CD8-positive, alpha-beta T cell (primary cell): ENCODE measurements at regions of chr20 and their contacts with region 1.

Region 1: GRCh38 chr20:4956200-4956810 is 45.0 kb downstream of the SLC23A2 start:
- DNase-seq: peak in 2 of 9 experiments; percentile 71 to 78
- ATAC-seq: peak; percentile 88
- H3K4me3 ChIP-seq: no peak overlapping the region
- H3K4me3 Mint-ChIP-seq: no peak overlapping the region
- H3K27ac ChIP-seq: no peak overlapping the region
- H3K27ac Mint-ChIP-seq: no peak overlapping the region
- H3K4me1 ChIP-seq: peaks cover under 1% of the 10 kb centered on the region
- H3K4me1 Mint-ChIP-seq: peaks cover 8% of the 10 kb centered on the region
- H3K27me3 ChIP-seq: no peaks in the 10 kb centered on the region
- H3K27me3 Mint-ChIP-seq: no peaks in the 10 kb centered on the region
- CTCF ChIP-seq: peak; percentile 92

Region 2: GRCh38 chr20:4607287-4607713 is 349.0 kb before region 1 on chr20:
- CTCF ChIA-PET with region 1: no interaction called
- POLR2A ChIA-PET with region 1: no interaction called
- intact Hi-C with region 1: loop called in 1 of 2 experiments (anchors 5 kb)
- DNase-seq: peak; percentile 29 to 77 (median 61)
- ATAC-seq: peak; percentile 88
- H3K4me3 ChIP-seq: no peak overlapping the region
- H3K4me3 Mint-ChIP-seq: no peak overlapping the region
- H3K27ac ChIP-seq: no peak overlapping the region
- H3K27ac Mint-ChIP-seq: no peak overlapping the region
- H3K4me1 ChIP-seq: no peaks in the 10 kb centered on the region
- H3K4me1 Mint-ChIP-seq: peaks cover 1% of the 10 kb centered on the region
- H3K27me3 ChIP-seq: no peaks in the 10 kb centered on the region
- H3K27me3 Mint-ChIP-seq: peaks cover 31% of the 10 kb centered on the region
- CTCF ChIP-seq: peak; percentile 99

Region 3: GRCh38 chr20:4740774-4741431 is 215.4 kb before region 1 on chr20:
- CTCF ChIA-PET with region 1: interaction called, 39 read pairs
- POLR2A ChIA-PET with region 1: no interaction called
- intact Hi-C with region 1: no loop called
- DNase-seq: peak; percentile 42 to 78 (median 66)
- ATAC-seq: peak; percentile 61
- H3K4me3 ChIP-seq: no peak overlapping the region
- H3K4me3 Mint-ChIP-seq: no peak overlapping the region
- H3K27ac ChIP-seq: no peak overlapping the region
- H3K27ac Mint-ChIP-seq: no peak overlapping the region
- H3K4me1 ChIP-seq: no peaks in the 10 kb centered on the region
- H3K4me1 Mint-ChIP-seq: no peaks in the 10 kb centered on the region
- H3K27me3 ChIP-seq: no peaks in the 10 kb centered on the region
- H3K27me3 Mint-ChIP-seq: peaks cover 11% of the 10 kb centered on the region
- CTCF ChIP-seq: peak; percentile 92

Region 4: DNA sequence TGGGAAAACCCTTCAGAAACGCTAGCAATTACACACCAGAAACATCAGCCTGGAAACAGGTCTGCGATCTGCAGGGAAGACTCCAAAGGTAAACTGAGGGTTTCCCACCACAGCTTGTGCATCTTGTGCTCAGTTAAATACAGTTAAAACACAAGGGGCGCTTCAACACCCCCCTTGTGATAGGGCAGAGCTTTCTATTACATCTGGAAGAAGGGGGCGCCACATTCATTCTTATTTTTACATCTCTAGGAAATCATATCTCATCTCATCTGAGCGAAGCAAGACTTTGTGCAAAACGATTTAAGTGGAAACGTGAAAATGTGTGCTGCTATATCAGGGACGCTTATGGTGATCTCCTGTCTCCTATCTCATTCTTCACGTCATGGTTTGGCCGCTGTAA is 176.1 kb before region 1 on chr20:
- CTCF ChIA-PET with region 1: interaction called, 14 read pairs
- POLR2A ChIA-PET with region 1: no interaction called
- intact Hi-C with region 1: loop called in 1 of 2 experiments (anchors 1 kb)
- DNase-seq: peak in 2 of 9 experiments; percentile 45 to 58
- ATAC-seq: peak; percentile 62
- H3K4me3 ChIP-seq: no peak overlapping the region
- H3K4me3 Mint-ChIP-seq: no peak overlapping the region
- H3K27ac ChIP-seq: no peak overlapping the region
- H3K27ac Mint-ChIP-seq: peak overlapping the region; percentile 75
- H3K4me1 ChIP-seq: no peaks in the 10 kb centered on the region
- H3K4me1 Mint-ChIP-seq: peaks cover 16% of the 10 kb centered on the region
- H3K27me3 ChIP-seq: no peaks in the 10 kb centered on the region
- H3K27me3 Mint-ChIP-seq: no peaks in the 10 kb centered on the region
- CTCF ChIP-seq: no peak

Region 5: DNA sequence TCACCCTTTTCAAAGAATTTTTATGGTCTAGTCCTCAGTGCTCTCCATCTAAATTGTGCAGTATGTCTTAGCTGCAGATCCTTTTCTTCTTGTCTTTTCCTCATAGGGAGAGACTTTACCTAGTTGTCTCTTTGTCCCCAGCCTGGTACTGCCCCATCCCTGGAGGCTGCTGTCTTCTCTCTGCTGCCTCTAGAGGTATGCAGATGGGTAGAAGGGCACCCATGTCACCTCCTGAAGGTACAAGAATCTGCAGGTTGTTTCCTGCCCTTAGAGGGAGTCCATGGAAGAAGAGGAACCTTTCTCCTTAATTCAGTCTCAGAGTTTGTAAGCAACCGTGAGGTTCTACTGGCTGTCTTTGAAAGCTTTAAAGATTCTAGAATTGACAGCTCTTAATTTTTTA is 1033.2 kb after region 1 on chr20:
- CTCF ChIA-PET with region 1: no interaction called
- POLR2A ChIA-PET with region 1: no interaction called
- intact Hi-C with region 1: no loop called
- DNase-seq: no peak
- ATAC-seq: no peak
- H3K4me3 ChIP-seq: no peak overlapping the region
- H3K4me3 Mint-ChIP-seq: no peak overlapping the region
- H3K27ac ChIP-seq: no peak overlapping the region
- H3K27ac Mint-ChIP-seq: no peak overlapping the region
- H3K4me1 ChIP-seq: no peaks in the 10 kb centered on the region
- H3K4me1 Mint-ChIP-seq: no peaks in the 10 kb centered on the region
- H3K27me3 ChIP-seq: no peaks in the 10 kb centered on the region
- H3K27me3 Mint-ChIP-seq: no peaks in the 10 kb centered on the region
- CTCF ChIP-seq: no peak